Activated CD4-positive, alpha-beta memory T cell treated with anti-CD3 and anti-CD28 coated beads for 36 hours (primary cell): ENCODE measurements at regions of chrX and their contacts with region 1.

Region 1: DNA sequence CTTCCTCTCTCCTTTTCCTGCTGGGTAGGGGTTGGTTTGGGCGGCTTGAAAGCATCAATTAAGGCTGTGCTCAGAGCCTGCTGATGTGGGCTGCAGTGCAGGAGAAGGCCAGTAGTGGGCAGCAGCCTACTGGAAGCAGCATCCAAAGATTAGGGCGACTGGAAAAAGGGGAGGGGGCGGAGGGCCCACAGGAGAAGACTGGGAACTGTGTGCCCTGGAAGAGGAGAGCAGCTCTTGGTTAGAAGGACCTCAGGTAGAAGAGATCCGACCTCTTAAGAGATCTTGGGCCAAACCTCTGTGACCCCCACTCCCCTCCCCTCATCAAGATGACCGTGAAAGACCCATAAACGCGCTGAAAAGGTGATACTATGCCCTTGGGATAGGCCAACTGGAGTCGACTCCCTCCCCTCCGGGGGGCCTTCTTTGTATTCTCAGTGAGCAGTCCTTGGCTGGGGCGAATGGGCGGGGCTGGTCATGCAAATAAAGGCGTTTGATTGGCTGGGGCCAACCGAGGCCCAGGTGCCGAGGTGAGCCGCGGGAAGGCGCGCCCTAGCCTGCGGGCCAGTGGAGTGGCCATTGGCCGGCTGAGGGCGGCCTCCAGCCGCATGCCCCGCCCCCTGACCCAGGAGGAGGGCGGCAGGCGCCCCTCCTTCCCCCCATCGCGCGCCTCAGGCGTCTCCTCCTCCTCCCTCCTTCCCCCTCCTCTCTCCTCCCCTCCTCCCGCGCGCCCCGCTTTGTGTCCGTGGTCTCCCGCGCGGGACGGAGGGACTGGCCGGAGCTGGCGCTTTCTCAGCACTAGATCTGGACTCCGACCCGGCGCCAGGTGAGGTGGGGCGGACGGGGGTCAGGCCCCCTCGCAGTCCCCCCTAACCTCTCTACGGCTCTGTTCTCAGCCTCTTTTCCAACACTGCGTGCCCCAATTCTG is 10.1 kb downstream of the DLG3 start:
- DNase-seq: peak; percentile 80
- H3K4me3 Mint-ChIP-seq: peak overlapping the region; percentile 76
- H3K27ac Mint-ChIP-seq: peak overlapping the region; percentile 83
- H3K4me1 Mint-ChIP-seq: peaks cover 30% of the 10 kb centered on the region
- H3K27me3 Mint-ChIP-seq: no peaks in the 10 kb centered on the region

Region 2: GRCh38 chrX:70433848-70434351 is 20.8 kb before region 1 on chrX:
- CTCF ChIA-PET with region 1: interaction called, 11 read pairs
- POLR2A ChIA-PET with region 1: interaction called, 4 read pairs
- intact Hi-C with region 1: no loop called
- DNase-seq: peak; percentile 83
- H3K4me3 Mint-ChIP-seq: peak overlapping the region; percentile 86
- H3K27ac Mint-ChIP-seq: peak overlapping the region; percentile 80
- H3K4me1 Mint-ChIP-seq: peaks cover 7% of the 10 kb centered on the region
- H3K27me3 Mint-ChIP-seq: peaks cover 2% of the 10 kb centered on the region

Region 3: DNA sequence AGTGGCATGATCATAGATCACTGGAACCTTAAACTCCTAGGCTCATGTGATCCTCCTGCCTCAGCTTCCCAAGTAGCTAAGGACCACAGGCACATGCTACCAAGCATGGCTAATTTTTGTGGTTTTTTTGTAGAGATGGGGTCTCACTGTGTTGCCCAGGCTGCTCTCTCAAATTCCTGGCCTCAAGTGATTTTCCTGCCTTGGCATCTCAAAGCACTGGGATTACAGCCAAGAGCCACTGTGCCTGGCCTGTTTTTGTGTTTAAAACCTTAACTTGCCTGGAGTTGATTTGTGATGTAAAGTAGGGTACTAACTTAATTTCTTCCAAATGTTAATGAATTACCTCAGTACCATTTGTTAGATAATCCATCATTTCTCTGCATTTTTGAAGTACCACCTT is 12.3 kb after region 1 on chrX:
- CTCF ChIA-PET with region 1: no interaction called
- POLR2A ChIA-PET with region 1: no interaction called
- intact Hi-C with region 1: no loop called
- DNase-seq: no peak
- H3K4me3 Mint-ChIP-seq: no peak overlapping the region
- H3K27ac Mint-ChIP-seq: no peak overlapping the region
- H3K4me1 Mint-ChIP-seq: peaks cover 12% of the 10 kb centered on the region
- H3K27me3 Mint-ChIP-seq: no peaks in the 10 kb centered on the region

Region 4: DNA sequence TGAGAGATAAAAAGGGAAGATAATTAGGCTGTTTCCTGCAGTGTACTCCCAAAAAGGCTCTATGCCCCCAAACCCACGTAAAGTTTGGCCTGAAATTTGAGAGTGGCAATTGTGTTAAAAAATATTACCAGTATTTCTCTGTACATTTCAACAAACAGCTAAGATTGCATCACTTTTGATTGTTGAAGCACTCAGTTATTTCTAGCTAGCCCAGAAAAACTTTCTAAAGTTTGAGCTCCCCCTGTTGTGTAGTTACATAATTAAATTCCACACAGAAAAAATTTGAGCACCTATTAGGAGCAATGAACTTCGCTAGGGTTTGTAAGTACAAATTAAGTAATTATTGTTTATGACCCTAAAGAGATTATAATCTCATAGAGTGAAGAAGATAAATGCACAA is 99.4 kb after region 1 on chrX:
- CTCF ChIA-PET with region 1: interaction called, 8 read pairs
- POLR2A ChIA-PET with region 1: no interaction called
- intact Hi-C with region 1: loop called (anchors 1 kb)
- DNase-seq: no peak
- H3K4me3 Mint-ChIP-seq: no peak overlapping the region
- H3K27ac Mint-ChIP-seq: no peak overlapping the region
- H3K4me1 Mint-ChIP-seq: peaks cover 12% of the 10 kb centered on the region
- H3K27me3 Mint-ChIP-seq: no peaks in the 10 kb centered on the region

Region 5: GRCh38 chrX:70664726-70665125 is 210.0 kb after region 1 on chrX:
- CTCF ChIA-PET with region 1: interaction called, 13 read pairs
- POLR2A ChIA-PET with region 1: no interaction called
- intact Hi-C with region 1: loop called (anchors 1 kb)
- DNase-seq: peak; percentile 7
- H3K4me3 Mint-ChIP-seq: no peak overlapping the region
- H3K27ac Mint-ChIP-seq: no peak overlapping the region
- H3K4me1 Mint-ChIP-seq: no peaks in the 10 kb centered on the region
- H3K27me3 Mint-ChIP-seq: no peaks in the 10 kb centered on the region

Region 6: DNA sequence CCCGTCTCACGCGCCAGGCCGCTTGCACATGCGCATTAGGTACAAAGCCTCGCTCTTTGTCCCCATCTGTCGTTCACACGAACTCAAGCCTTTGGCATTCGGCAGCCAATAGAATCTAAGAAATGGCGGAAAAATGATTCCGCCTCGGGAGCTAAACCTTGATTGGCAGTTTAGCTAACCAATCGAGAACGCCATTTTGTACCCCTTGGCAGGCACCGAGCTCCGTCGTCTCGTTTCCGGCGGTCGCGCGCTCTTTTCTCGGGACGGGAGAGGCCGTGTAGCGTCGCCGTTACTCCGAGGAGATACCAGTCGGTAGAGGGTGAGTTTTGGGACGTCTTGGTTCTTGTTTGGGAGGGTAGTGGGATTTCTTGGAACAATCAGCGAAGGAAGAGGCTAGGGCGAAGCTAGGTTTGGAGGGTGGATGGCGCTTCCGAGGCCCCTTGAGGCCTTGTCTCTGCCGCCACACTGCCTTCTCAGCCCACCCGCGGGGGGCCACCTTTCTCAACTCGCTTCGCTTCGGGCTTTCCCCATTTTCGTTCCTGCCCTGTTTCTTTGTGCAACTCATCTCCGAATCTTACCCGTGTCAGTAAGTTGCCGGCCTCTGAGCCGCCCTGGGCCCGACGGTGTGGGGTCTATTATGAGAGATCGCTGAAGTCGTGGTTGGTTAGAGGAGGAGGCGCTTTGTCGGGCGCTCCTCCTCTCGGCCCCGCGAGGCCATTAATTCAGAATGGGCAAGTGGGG is 828.9 kb after region 1 on chrX and contains the start of gene NONO:
- CTCF ChIA-PET with region 1: no interaction called
- POLR2A ChIA-PET with region 1: no interaction called
- intact Hi-C with region 1: loop called (anchors 5 kb)
- DNase-seq: peak; percentile 85
- H3K4me3 Mint-ChIP-seq: peak within 1 kb of the TSS; percentile 98
- H3K27ac Mint-ChIP-seq: peak within 1 kb of the TSS; percentile 100
- H3K4me1 Mint-ChIP-seq: peaks cover 10% of the 10 kb centered on the region
- H3K27me3 Mint-ChIP-seq: no peaks in the 10 kb centered on the region
- total RNA-seq, gene NONO: 450 to 460 TPM